ENCODE measurements at regions of chr7 and their contacts with region 1.

Region 1: GRCh38 chr7:4973728-4974198 is 14.8 kb upstream of the MMD2 start:
- DNase-seq: peak; percentile 86 to 96
- H3K4me3 ChIP-seq: peak overlapping the region; percentile 96
- H3K27ac ChIP-seq: peak overlapping the region; percentile 31; the same call in 1 of the 2 replicates
- H3K4me1 ChIP-seq: peaks cover 5% of the 10 kb centered on the region; the same call in 1 of the 2 replicates
- H3K27me3 ChIP-seq: 0 out of 2 replicates have a peak, but pooled peaks cover 3% of the 10 kb centered on the region
- CTCF ChIP-seq: peak; percentile 94

Region 2: GRCh38 chr7:3861941-3862340 is 1111.8 kb before region 1 on chr7:
- CTCF ChIA-PET with region 1: no interaction called
- POLR2A ChIA-PET with region 1: no interaction called
- intact Hi-C with region 1: no loop called
- DNase-seq: no peak
- H3K4me3 ChIP-seq: no peak overlapping the region
- H3K27ac ChIP-seq: no peak overlapping the region
- H3K4me1 ChIP-seq: no peaks in the 10 kb centered on the region
- H3K27me3 ChIP-seq: peaks cover 63% of the 10 kb centered on the region
- CTCF ChIP-seq: no peak

Region 3: DNA sequence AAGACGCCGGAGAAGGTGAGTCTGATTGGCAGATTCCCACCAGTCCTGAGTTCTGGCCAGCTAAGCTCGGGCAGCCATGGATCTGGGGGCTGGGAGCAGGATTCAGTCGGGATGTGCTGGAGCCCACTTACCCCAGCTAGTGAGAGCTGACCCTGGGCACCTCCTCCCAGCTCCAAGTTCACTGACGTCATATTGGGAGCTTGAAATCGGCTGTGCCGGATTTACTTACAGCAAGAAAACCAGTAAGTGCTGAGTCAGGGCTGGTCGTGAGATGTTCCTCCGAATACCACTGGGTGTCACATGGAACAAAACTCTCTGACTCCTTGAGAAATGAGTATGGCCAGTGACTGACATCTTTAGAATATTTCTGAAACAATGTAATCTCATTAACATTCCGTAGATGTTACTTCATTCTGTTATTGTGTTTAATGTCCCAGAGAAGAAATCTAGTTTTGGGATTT is 1051.6 kb before region 1 on chr7:
- CTCF ChIA-PET with region 1: interaction called, 12 read pairs
- POLR2A ChIA-PET with region 1: no interaction called
- intact Hi-C with region 1: no loop called
- DNase-seq: peak; percentile 3 to 76
- H3K4me3 ChIP-seq: no peak overlapping the region
- H3K27ac ChIP-seq: no peak overlapping the region
- H3K4me1 ChIP-seq: no peaks in the 10 kb centered on the region
- H3K27me3 ChIP-seq: peaks cover 74% of the 10 kb centered on the region
- CTCF ChIP-seq: peak; percentile 22; the same call in 1 of the 2 replicates

Region 4: DNA sequence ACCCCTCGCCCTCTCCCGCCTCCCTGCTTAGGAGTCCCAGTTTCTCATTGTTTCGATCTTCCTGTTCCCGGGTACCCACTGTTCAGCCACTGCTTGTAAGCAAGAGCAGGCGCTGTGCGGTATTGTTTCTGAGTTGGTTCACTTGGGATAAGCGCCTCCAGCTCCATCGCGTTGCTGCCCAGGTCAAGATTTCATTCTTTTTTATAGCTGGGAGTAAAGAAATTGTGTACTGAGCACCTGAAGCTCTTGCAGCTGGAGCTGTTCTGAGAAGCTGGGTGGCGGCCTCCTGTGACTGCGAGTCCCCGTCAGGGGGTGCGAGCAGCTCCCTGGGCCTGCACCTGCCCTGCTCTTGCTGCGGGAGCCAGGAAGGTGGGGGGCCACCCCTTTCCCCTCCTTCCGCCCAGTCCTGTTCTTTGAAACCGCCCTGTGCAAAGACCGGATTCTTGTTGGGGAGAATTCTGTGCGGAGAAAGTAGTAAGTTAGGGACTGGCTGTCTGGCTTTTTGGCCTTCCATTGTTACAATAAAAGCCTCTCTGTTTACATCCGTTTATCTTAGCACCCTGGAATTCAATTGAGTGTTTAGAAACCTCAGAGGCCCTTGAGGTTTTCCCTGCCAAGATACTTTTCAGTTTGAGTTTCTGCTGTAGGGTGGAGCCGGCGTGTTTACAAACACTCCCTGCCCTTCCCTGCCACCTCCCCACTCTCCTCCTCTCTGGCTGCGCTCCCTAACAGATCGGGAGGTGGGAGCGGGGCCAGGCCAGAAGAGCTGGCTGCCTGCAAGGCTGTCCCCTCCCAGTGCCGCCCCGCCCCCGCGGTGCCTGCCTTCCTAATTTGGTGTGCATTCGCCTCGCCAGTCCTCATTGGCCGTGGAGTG is 229.1 kb before region 1 on chr7:
- CTCF ChIA-PET with region 1: no interaction called
- POLR2A ChIA-PET with region 1: interaction called, 13 read pairs
- intact Hi-C with region 1: no loop called
- DNase-seq: peak; percentile 98 to 100
- H3K4me3 ChIP-seq: peak overlapping the region; percentile 30; the same call in 1 of the 2 replicates
- H3K27ac ChIP-seq: peak overlapping the region; percentile 93
- H3K4me1 ChIP-seq: peaks cover 37% of the 10 kb centered on the region
- H3K27me3 ChIP-seq: no peaks in the 10 kb centered on the region
- CTCF ChIP-seq: no peak

Region 5: DNA sequence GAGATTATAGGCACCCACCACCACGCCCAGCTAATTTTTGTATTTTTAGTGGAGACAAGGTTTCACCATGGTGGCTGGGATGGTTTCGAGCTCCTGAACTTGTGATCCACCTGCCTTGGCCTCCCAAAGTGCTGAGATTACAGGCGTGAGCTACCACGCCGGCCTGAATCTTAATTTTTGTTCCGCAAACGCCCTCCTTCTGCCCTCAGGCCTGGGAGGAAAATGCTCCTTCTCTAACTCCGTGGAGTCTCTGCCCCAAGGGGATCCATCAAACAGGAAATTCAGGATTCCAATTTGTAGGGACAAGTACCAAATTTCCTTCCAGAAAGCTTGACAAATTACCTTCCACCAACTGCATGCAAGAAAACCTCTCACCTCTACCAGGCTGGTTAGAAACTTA is 115.1 kb after region 1 on chr7:
- CTCF ChIA-PET with region 1: interaction called, 11 read pairs
- POLR2A ChIA-PET with region 1: no interaction called
- intact Hi-C with region 1: no loop called
- DNase-seq: peak; percentile 73 to 84
- H3K4me3 ChIP-seq: no peak overlapping the region; the same call in 1 of the 2 replicates
- H3K27ac ChIP-seq: no peak overlapping the region
- H3K4me1 ChIP-seq: peaks cover 6% of the 10 kb centered on the region; the same call in 1 of the 2 replicates
- H3K27me3 ChIP-seq: peaks cover 6% of the 10 kb centered on the region; the same call in 1 of the 2 replicates
- CTCF ChIP-seq: no peak

Region 6: DNA sequence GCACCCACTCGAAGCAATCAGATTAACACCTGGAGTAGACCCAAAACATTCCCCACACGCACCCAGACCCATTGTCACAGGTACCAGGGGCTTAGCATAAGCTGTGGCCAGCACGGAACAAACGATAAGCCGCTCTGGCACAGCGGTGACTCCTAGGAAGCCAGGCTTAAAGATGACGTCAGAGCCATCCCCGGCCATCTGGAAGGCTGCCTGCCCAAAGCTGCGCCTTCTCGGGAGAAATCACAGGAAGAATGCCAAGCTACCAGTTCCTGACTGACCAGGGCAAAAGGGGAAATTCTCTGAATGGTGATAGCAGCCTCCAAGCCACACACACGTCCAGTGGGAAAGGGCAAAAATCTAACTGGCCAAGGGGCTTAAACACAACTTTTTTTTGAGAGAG is 203.3 kb after region 1 on chr7:
- CTCF ChIA-PET with region 1: interaction called, 4 read pairs
- POLR2A ChIA-PET with region 1: no interaction called
- intact Hi-C with region 1: loop called (anchors 10 kb)
- DNase-seq: peak; percentile 54 to 72
- H3K4me3 ChIP-seq: 0 out of 2 replicates have a peak overlapping the region, but pooled peaks have one; percentile 10
- H3K27ac ChIP-seq: no peak overlapping the region
- H3K4me1 ChIP-seq: no peaks in the 10 kb centered on the region
- H3K27me3 ChIP-seq: peaks cover 36% of the 10 kb centered on the region
- CTCF ChIP-seq: no peak